CD4-positive, alpha-beta T cell (primary cell): ENCODE measurements at regions of chr14 and their contacts with region 1.

Region 1: GRCh38 chr14:103333754-103334643 is at the start of gene EIF5:
- DNase-seq: peak; percentile 96 to 100 (median 98)
- ATAC-seq: peak; percentile 85
- H3K4me3 ChIP-seq: peak within 1 kb of the TSS; percentile 86
- H3K4me3 Mint-ChIP-seq: peak within 1 kb of the TSS; percentile 100
- H3K27ac ChIP-seq: peak within 1 kb of the TSS; percentile 97 to 99
- H3K27ac Mint-ChIP-seq: peak within 1 kb of the TSS; percentile 100
- H3K4me1 ChIP-seq: peaks cover 29% of the 10 kb centered on the region
- H3K4me1 Mint-ChIP-seq: peaks cover 53% of the 10 kb centered on the region
- H3K27me3 ChIP-seq: no peaks in the 10 kb centered on the region
- H3K27me3 Mint-ChIP-seq: peaks cover 4% of the 10 kb centered on the region
- CTCF ChIP-seq: no peak
- total RNA-seq, gene EIF5: 658 TPM

Region 2: GRCh38 chr14:102304611-102305509 is 1029.1 kb before region 1 on chr14 and contains the start of gene MOK:
- CTCF ChIA-PET with region 1: no interaction called
- POLR2A ChIA-PET with region 1: no interaction called
- intact Hi-C with region 1: loop called in 1 of 2 experiments (anchors 5 kb)
- DNase-seq: peak; percentile 93 to 99 (median 96)
- ATAC-seq: peak; percentile 91
- H3K4me3 ChIP-seq: peak within 1 kb of the TSS; percentile 81
- H3K4me3 Mint-ChIP-seq: peak within 1 kb of the TSS; percentile 95
- H3K27ac ChIP-seq: peak within 1 kb of the TSS; percentile 57 to 77
- H3K27ac Mint-ChIP-seq: peak within 1 kb of the TSS; percentile 91
- H3K4me1 ChIP-seq: peaks cover 12% of the 10 kb centered on the region
- H3K4me1 Mint-ChIP-seq: peaks cover 6% of the 10 kb centered on the region
- H3K27me3 ChIP-seq: no peaks in the 10 kb centered on the region
- H3K27me3 Mint-ChIP-seq: peaks cover 5% of the 10 kb centered on the region
- CTCF ChIP-seq: no peak
- total RNA-seq, gene MOK: 2.3 to 2.5 TPM

Region 3: GRCh38 chr14:102591889-102592763 is 741.9 kb before region 1 on chr14 and contains the start of gene RCOR1:
- CTCF ChIA-PET with region 1: no interaction called
- POLR2A ChIA-PET with region 1: interaction called, 4 read pairs
- intact Hi-C with region 1: loop called in 1 of 2 experiments (anchors 5 kb)
- DNase-seq: peak; percentile 97 to 99 (median 98)
- ATAC-seq: peak; percentile 88
- H3K4me3 ChIP-seq: peak within 1 kb of the TSS; percentile 77
- H3K4me3 Mint-ChIP-seq: peak within 1 kb of the TSS; percentile 99
- H3K27ac ChIP-seq: peak within 1 kb of the TSS; percentile 86 to 88
- H3K27ac Mint-ChIP-seq: peak within 1 kb of the TSS; percentile 95
- H3K4me1 ChIP-seq: peaks cover 25% of the 10 kb centered on the region
- H3K4me1 Mint-ChIP-seq: peaks cover 30% of the 10 kb centered on the region
- H3K27me3 ChIP-seq: no peaks in the 10 kb centered on the region
- H3K27me3 Mint-ChIP-seq: no peaks in the 10 kb centered on the region
- CTCF ChIP-seq: no peak
- total RNA-seq, gene RCOR1: 20.5 to 23.1 TPM

Region 4: DNA sequence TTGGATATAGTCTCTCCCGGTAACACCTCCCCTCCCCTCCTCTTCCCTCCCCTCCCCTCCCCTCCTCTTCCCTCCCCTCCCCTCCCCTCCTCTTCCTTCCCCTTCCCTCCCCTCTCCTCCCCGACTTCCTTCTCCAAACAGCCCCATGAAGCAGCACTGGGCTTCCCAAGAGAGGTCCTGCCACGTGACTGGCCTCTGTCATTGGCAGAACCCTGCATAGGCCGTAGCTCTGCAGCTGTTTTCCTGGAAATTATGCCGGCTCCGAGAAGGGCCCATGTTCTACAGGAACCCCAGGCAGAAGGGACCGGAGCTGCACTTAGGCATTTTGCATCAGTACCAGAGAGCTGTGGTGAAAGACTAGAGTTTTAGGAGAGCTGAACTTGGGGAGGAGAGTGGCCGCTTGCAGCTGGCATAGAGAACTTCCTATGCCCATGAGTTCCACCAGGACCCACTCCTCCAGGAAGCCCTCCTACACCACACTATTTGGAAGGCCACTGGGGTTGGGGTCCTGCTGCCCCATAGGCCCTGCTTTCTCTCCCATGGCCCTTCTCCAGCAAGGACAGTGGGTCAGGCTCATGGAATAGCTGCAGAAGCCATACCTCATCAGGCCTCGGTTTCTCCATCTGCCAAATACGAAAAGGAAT is 215.9 kb before region 1 on chr14:
- CTCF ChIA-PET with region 1: no interaction called
- POLR2A ChIA-PET with region 1: no interaction called
- intact Hi-C with region 1: no loop called
- DNase-seq: peak in 2 of 14 experiments; percentile 43 to 46
- ATAC-seq: no peak
- H3K4me3 ChIP-seq: no peak overlapping the region
- H3K4me3 Mint-ChIP-seq: no peak overlapping the region
- H3K27ac ChIP-seq: no peak overlapping the region
- H3K27ac Mint-ChIP-seq: no peak overlapping the region
- H3K4me1 ChIP-seq: peaks cover 30% of the 10 kb centered on the region
- H3K4me1 Mint-ChIP-seq: peaks cover 8% of the 10 kb centered on the region
- H3K27me3 ChIP-seq: peaks cover 15 to 28% of the 10 kb centered on the region in 2 experiments
- H3K27me3 Mint-ChIP-seq: peaks cover 19% of the 10 kb centered on the region
- CTCF ChIP-seq: no peak

Region 5: DNA sequence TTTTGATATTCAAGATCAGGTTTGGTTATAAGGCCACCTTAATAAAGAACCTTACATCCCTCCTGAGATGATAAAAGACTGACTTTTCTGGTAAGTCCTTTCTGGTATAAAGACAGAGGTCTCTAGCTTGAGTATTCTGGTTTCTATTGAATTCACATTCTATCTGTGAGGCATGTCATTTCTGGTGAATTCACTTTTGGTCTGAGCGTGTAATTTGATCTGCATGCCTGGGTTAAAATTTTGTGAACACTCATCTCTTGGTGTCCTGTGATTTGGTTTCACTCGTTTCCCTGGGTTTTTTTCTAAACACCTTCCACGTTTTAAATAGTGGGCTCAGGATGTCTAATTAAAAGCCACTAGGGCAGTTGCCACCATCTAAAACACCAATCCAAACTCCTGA is 12.3 kb after region 1 on chr14:
- CTCF ChIA-PET with region 1: no interaction called
- POLR2A ChIA-PET with region 1: interaction called, 51 read pairs
- intact Hi-C with region 1: no loop called
- DNase-seq: no peak
- ATAC-seq: no peak
- H3K4me3 ChIP-seq: no peak overlapping the region
- H3K4me3 Mint-ChIP-seq: no peak overlapping the region
- H3K27ac ChIP-seq: no peak overlapping the region
- H3K27ac Mint-ChIP-seq: peak overlapping the region; percentile 47
- H3K4me1 ChIP-seq: no peaks in the 10 kb centered on the region
- H3K4me1 Mint-ChIP-seq: peaks cover 20% of the 10 kb centered on the region
- H3K27me3 ChIP-seq: no peaks in the 10 kb centered on the region
- H3K27me3 Mint-ChIP-seq: no peaks in the 10 kb centered on the region
- CTCF ChIP-seq: no peak

Region 6: GRCh38 chr14:103391048-103391447 is 57.0 kb after region 1 on chr14:
- CTCF ChIA-PET with region 1: interaction called, 14 read pairs
- POLR2A ChIA-PET with region 1: interaction called, 26 read pairs
- intact Hi-C with region 1: no loop called
- DNase-seq: peak; percentile 8 to 78 (median 38)
- ATAC-seq: peak; percentile 75
- H3K4me3 ChIP-seq: no peak overlapping the region
- H3K4me3 Mint-ChIP-seq: peak overlapping the region; percentile 72
- H3K27ac ChIP-seq: no peak overlapping the region
- H3K27ac Mint-ChIP-seq: peak overlapping the region; percentile 73
- H3K4me1 ChIP-seq: peaks cover 67% of the 10 kb centered on the region
- H3K4me1 Mint-ChIP-seq: peaks cover 77% of the 10 kb centered on the region
- H3K27me3 ChIP-seq: no peaks in the 10 kb centered on the region
- H3K27me3 Mint-ChIP-seq: no peaks in the 10 kb centered on the region
- CTCF ChIP-seq: peak; percentile 90

Region 7: DNA sequence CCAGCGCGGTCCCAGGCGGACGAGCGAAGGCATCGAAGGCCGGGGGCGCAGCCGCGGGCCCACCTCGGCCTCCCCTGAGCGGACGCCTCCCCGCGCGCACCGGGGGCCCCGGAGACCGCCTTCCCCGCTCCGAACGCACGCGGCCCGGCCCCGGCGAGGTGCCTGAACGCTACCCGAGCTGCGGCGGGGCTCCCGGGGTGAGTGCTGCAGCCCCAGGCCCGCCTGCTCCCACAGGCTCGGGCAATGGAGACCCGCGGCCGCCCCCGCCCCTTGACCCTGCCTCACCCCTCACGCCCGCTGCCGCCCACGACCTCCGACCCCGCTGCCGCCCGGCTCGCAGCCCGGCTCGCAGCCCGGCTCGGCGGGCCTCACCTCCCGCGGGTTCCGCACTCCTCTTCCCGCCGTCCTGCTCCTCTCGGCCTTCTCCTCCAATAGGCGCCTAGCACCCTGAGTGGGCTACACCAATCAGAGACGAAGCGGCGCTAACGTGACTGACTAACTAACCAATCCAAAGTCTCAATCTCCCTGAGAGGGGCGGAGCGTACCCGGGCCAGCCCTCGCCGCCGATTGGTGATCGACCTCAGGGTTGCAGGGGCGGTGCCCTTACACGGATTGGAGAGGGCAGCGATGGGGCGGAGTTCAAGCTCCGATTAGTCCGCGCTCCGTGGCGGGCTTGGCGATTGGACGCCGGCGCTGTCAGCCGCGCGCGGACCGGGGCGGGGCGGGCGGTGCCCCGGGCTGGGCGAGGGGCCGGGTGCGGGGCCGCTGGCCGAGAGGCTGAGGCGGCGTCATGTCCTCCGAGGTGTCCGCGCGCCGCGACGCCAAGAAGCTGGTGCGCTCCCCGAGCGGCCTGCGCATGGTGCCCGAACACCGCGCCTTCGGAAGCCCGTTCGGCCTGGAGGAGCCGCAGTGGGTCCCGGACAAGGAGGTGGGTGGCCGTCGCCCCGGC is 381.3 kb after region 1 on chr14 and contains the starts of genes XRCC3 and ZFYVE21:
- CTCF ChIA-PET with region 1: no interaction called
- POLR2A ChIA-PET with region 1: interaction called, 3 read pairs
- intact Hi-C with region 1: loop called in 1 of 2 experiments (anchors 5 kb)
- DNase-seq: peak; percentile 99 to 100 (median 99)
- ATAC-seq: peak; percentile 93
- H3K4me3 ChIP-seq: peak within 1 kb of the TSS; percentile 51
- H3K4me3 Mint-ChIP-seq: peak within 1 kb of the TSS; percentile 94
- H3K27ac ChIP-seq: no peak within 1 kb of the TSS
- H3K27ac Mint-ChIP-seq: peak within 1 kb of the TSS; percentile 84
- H3K4me1 ChIP-seq: peaks cover 39% of the 10 kb centered on the region
- H3K4me1 Mint-ChIP-seq: peaks cover 43% of the 10 kb centered on the region
- H3K27me3 ChIP-seq: no peaks in the 10 kb centered on the region
- H3K27me3 Mint-ChIP-seq: no peaks in the 10 kb centered on the region
- CTCF ChIP-seq: no peak
- total RNA-seq, gene XRCC3: 4.6 to 4.8 TPM
- total RNA-seq, gene ZFYVE21: 2.6 to 3.0 TPM

Region 8: GRCh38 chr14:103746701-103747100 is 412.7 kb after region 1 on chr14:
- CTCF ChIA-PET with region 1: no interaction called
- POLR2A ChIA-PET with region 1: no interaction called
- intact Hi-C with region 1: no loop called
- DNase-seq: no peak
- ATAC-seq: no peak
- H3K4me3 ChIP-seq: no peak overlapping the region
- H3K4me3 Mint-ChIP-seq: no peak overlapping the region
- H3K27ac ChIP-seq: no peak overlapping the region
- H3K27ac Mint-ChIP-seq: no peak overlapping the region
- H3K4me1 ChIP-seq: peaks cover 12% of the 10 kb centered on the region
- H3K4me1 Mint-ChIP-seq: peaks cover 11% of the 10 kb centered on the region
- H3K27me3 ChIP-seq: no peaks in the 10 kb centered on the region
- H3K27me3 Mint-ChIP-seq: no peaks in the 10 kb centered on the region
- CTCF ChIP-seq: no peak